ENCODE measurements at regions of chr9 and their contacts with region 1.

Region 1: DNA sequence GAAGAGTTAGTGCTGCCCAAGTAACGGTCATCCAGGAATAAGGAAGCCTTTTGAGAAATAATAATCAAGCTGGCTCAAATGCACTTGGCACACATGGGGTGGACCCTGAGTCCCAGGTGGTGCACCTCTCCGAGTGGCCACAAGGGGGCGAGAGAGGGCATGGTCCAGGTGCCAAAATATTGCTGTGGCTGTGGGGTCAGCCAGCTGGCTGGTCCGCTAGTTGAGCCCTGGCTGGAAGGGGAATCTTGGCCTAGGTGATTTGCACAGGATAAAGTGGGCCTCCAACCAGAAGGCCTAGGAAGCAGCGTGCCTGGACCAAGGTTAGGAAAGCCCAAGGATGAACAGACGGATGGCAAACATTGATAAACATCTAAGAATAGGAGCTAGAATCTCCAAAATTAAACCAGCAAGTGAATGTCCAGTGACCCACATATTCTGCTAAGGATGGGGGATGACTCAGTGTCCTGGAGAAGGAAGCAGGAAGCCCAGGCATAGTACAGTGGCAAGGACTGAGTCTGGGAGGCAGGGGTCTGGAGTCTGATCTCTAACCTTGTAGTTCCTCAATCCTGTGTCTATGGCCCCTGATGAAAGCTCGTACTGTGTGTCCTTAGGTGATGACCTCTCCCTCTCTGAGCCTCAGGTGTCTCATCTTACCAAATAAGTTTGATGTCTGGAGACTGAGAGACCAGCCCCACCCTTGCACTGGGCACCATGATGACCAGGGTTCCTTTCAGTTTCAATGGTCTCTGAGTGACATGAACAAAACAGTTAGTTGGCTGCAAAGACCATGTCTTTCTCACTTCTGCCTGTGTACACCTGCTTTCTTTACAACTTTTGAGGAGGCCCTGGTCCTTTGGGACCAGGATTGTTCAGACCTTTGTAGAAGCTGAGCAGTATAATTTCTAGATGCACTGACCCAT is 19.2 kb upstream of the SHB start:
- DNase-seq: peak; percentile 58 to 96
- H3K4me3 ChIP-seq: no peak overlapping the region
- CTCF ChIP-seq: peak in 1 of 3 donors; percentile 77
- POLR2A ChIP-seq: no peak

Region 2: DNA sequence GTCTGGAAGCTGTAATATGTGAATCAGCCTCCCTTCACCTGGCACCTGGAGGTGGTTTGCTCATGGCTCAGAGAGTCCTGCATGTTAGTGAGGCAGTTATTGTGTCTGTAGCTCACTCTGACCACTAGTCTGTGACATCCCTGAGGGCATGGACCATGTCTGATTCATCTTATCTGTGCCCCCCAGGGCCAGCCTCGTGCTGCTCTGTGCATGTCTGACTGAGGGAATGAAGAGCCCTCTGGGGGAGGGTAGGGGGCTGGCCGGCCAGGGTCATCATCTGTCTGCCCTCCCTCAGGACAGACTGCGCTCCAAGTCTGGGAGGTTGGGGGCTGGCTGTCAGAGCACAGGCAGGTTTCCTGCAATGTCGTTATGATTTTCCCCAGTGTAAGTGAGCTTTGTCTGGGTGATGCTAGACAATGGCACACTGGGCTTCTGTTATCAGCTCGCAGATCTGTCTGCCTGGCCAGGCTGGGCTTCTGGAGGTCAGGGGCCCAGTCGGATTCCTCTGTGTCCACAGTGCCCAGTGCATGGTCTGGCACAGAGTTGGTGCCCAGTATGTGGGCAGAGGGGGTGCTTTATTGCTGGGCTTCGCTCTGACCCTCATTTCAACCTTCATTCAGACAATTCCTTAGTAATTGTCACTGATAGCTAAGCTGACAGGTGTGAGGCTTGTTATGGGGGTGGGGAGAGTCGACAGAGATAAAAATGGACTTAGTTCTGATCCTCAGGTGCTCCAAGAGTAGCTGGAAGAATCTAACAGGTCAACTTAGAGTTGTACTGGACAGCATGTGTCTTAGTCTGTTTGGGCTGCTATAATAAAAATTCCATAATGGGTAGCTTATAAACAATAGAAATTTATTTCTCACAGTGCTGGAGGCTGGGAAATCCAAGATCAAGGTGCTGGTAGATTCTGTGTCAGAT is 66.5 kb after region 1 on chr9:
- intact Hi-C with region 1: loop called (anchors 10 kb)
- DNase-seq: peak in 1 of 2 donors; percentile 65
- H3K4me3 ChIP-seq: no peak overlapping the region
- CTCF ChIP-seq: no peak
- POLR2A ChIP-seq: no peak

Measured in lower leg skin (tissue), 4 donors.